ENCODE measurements at regions of chr4 and their contacts with region 1.

Region 1: GRCh38 chr4:187618701-187619281 is 376.8 kb upstream of the ZFP42 start:
- DNase-seq: no peak
- ATAC-seq: no peak
- H3K4me3 ChIP-seq: no peak overlapping the region
- H3K27ac ChIP-seq: no peak overlapping the region
- H3K4me1 ChIP-seq: no peaks in the 10 kb centered on the region
- H3K27me3 ChIP-seq: no peaks in the 10 kb centered on the region
- CTCF ChIP-seq: no peak

Region 2: GRCh38 chr4:187541666-187542065 is 77.1 kb before region 1 on chr4:
- intact Hi-C with region 1: no loop called
- DNase-seq: no peak
- ATAC-seq: no peak
- H3K4me3 ChIP-seq: no peak overlapping the region
- H3K27ac ChIP-seq: no peak overlapping the region
- H3K4me1 ChIP-seq: no peaks in the 10 kb centered on the region
- H3K27me3 ChIP-seq: no peaks in the 10 kb centered on the region
- CTCF ChIP-seq: no peak

Region 3: GRCh38 chr4:188372826-188373225 is 754.0 kb after region 1 on chr4:
- intact Hi-C with region 1: loop called in 1 of 2 experiments (anchors 5 kb)
- DNase-seq: no peak
- ATAC-seq: no peak
- H3K4me3 ChIP-seq: no peak overlapping the region
- H3K27ac ChIP-seq: no peak overlapping the region
- H3K4me1 ChIP-seq: no peaks in the 10 kb centered on the region
- H3K27me3 ChIP-seq: no peaks in the 10 kb centered on the region
- CTCF ChIP-seq: peak; percentile 21